ENCODE measurements at regions of chr1 and their contacts with region 1.

Region 1: DNA sequence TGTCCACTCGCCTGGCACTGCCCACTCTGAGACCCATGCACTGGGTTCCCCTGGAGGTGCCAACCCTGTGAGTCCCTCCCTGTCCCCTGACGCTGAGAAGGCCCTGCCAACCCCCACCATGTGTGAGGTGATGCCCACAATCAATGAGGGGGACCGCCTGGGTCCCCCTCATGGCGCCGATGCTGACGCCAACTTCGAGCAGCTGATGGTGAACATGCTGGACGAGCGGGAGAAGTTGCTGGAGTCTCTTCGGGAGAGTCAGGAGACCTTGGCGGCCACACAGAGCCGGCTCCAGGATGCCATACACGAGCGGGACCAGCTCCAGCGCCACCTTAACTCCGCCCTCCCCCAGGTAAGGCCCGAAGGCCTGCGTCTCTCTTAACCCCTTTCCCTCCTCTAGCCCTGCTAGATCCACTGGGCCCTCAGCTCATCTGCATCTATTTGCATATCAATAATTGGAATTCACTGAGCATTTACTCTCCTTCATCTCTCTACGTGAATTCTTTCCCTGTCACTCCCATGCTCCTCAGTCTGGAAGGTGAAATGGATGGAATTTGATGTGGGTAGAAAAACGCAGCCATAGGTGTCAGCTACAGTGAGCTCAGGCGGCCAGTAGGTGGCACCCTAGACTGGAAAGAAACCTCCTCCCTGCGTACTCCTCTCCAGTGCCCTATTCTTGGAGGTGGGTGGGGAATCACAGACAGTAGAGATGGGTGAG is 12.8 kb downstream of the PPFIA4 start:
- DNase-seq: peak; percentile 84
- H3K4me3 ChIP-seq: no peak overlapping the region; a peak in 1 of 4 replicates
- H3K27ac ChIP-seq: peak overlapping the region in 1 of 2 experiments; percentile 50; a peak in 1 of 4 replicates
- H3K4me1 ChIP-seq: peaks cover 20 to 42% of the 10 kb centered on the region in 2 experiments; a peak in 3 of 4 replicates
- H3K27me3 ChIP-seq: no peaks in the 10 kb centered on the region
- CTCF ChIP-seq: peak; percentile 97
- EP300 ChIP-seq: no peak
- RAD21 ChIP-seq: peak; percentile 93

Region 2: GRCh38 chr1:203026031-203026989 is 12.7 kb before region 1 on chr1 and contains the start of gene PPFIA4:
- CTCF ChIA-PET with region 1: interaction called, 73 read pairs
- POLR2A ChIA-PET with region 1: interaction called, 7 read pairs
- DNase-seq: peak; percentile 99
- H3K4me3 ChIP-seq: peak within 1 kb of the TSS; percentile 70 to 74
- H3K27ac ChIP-seq: peak within 1 kb of the TSS in 1 of 2 experiments; percentile 58; a peak in 1 of 4 replicates
- H3K4me1 ChIP-seq: peaks cover 0 to 34% of the 10 kb centered on the region in 2 experiments; a peak in 1 of 4 replicates
- H3K27me3 ChIP-seq: no peaks in the 10 kb centered on the region
- CTCF ChIP-seq: no peak
- EP300 ChIP-seq: 0 out of 4 replicates have a peak, but pooled peaks of 1 of the 2 experiments have one; percentile 16
- RAD21 ChIP-seq: peak; percentile 45
- polyA plus RNA-seq, gene PPFIA4: 4.4 and 5.5 TPM in 2 replicates

Region 3: GRCh38 chr1:203069030-203069747 is 30.1 kb after region 1 on chr1:
- CTCF ChIA-PET with region 1: interaction called, 52 read pairs
- POLR2A ChIA-PET with region 1: interaction called, 3 read pairs
- DNase-seq: peak; percentile 63
- H3K4me3 ChIP-seq: no peak overlapping the region
- H3K27ac ChIP-seq: peak overlapping the region in 1 of 2 experiments; percentile 87; a peak in 2 of 4 replicates
- H3K4me1 ChIP-seq: peaks cover 0 to 19% of the 10 kb centered on the region in 2 experiments; a peak in 2 of 4 replicates
- H3K27me3 ChIP-seq: no peaks in the 10 kb centered on the region
- CTCF ChIP-seq: no peak
- EP300 ChIP-seq: no peak
- RAD21 ChIP-seq: no peak

Region 4: DNA sequence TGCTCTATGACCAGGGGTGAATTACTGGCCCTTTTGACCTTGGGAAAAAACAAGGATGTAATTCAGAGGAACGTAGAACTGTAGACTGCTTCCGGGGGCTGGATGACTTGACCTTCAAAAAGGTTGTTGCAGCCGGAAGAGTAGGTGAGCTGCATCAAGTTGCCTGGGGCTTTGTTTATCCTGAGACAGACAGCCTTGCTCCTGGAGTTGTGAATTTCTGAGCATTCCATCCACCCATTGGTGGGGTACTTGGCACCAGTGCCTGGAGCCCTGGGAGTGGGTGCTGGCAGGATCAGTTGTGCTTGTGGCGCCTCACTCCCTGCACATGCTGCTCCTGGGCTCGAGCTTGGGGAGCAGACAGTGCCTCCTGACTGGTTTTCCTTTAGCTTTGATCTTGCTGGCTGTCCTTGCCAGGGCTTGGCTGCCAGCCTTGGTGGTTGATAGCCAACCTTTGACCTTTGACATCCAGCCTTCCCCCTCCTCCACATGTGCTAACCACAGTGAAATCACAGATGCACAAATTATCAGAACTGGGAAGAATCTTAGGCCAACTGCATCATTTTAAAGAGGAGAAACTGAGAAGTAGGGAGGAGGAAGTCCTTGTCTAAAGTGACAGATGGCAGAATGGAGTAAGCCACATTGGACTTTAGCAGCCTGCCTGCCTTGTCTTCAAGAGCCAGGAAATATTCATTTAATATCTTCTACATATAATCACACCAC is 63.0 kb after region 1 on chr1:
- CTCF ChIA-PET with region 1: interaction called, 28 read pairs
- POLR2A ChIA-PET with region 1: no interaction called
- DNase-seq: no peak
- H3K4me3 ChIP-seq: no peak overlapping the region
- H3K27ac ChIP-seq: no peak overlapping the region
- H3K4me1 ChIP-seq: no peaks in the 10 kb centered on the region; a peak in 1 of 4 replicates
- H3K27me3 ChIP-seq: no peaks in the 10 kb centered on the region; the same call in 1 of the 2 replicates
- CTCF ChIP-seq: no peak
- EP300 ChIP-seq: no peak
- RAD21 ChIP-seq: no peak

Region 5: DNA sequence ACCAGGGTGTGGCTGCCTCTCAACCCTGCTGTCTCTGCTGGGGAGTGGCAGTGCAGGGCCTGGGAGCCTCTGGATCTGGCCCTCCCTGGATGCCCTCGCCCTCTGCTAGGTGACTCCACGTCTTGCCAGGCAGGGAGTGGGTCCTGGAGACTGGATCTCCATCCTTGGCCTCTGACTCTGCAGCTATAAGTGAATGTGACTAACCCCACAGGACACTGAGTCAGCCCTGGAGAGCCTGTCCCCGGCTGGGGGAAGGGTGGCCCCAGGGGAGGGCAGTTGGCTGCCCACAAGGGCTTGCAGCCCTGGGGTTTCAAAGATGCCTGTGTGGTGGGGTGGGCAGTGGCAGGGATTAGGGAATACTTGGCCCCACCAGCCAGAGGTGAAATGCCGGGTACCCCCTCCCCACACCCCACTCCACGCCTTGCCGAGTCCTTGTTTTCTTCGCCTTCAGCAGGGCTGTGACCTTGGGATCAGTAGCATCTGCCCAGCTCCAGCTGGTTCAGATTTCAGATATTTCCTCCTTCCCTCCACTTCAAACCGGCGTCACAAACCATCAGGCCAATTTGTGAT is 138.5 kb after region 1 on chr1:
- CTCF ChIA-PET with region 1: interaction called, 37 read pairs
- POLR2A ChIA-PET with region 1: no interaction called
- DNase-seq: no peak
- H3K4me3 ChIP-seq: no peak overlapping the region
- H3K27ac ChIP-seq: peak overlapping the region in 1 of 2 experiments; percentile 57; a peak in 1 of 4 replicates
- H3K4me1 ChIP-seq: peaks cover 17 to 38% of the 10 kb centered on the region in 2 experiments; a peak in 2 of 4 replicates
- H3K27me3 ChIP-seq: no peaks in the 10 kb centered on the region
- CTCF ChIP-seq: no peak
- EP300 ChIP-seq: no peak
- RAD21 ChIP-seq: no peak

Region 6: DNA sequence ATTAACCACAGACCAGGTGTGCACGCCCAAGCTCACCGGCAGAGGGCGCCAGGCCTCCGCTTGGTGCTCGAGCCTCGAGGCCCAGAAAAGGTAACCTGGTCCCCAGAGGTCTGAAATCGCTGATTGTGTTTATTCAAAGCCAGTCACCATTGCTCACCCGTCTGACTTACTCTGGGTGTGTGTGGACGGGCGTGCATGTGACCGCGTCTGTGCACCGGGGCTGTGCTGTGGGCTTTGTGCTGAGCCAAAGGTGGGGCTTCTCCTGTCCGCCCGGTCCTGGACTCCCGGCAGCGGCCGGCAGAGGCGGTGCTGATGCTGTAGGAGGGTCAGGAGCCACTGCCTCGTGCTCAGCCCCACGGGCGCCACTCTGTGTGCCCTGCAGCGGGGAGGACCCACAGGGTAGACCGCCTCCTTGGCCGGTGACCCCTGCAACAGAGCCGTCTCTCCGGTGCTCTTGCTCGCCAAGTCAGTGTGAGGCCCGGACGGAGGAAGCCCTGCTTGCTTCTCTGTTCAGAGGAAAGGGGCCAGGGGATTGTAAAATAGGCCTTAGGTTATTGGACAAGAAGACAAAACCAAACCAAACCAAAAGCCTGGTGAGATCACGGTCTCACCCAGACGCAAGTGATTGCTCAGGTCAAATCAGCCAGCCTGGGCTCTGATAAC is 234.3 kb after region 1 on chr1:
- CTCF ChIA-PET with region 1: interaction called, 228 read pairs
- POLR2A ChIA-PET with region 1: no interaction called
- DNase-seq: peak; percentile 86
- H3K4me3 ChIP-seq: peak overlapping the region in 1 of 2 experiments; percentile 31; a peak in 1 of 4 replicates
- H3K27ac ChIP-seq: no peak overlapping the region
- H3K4me1 ChIP-seq: peaks cover 0 to 28% of the 10 kb centered on the region in 2 experiments; a peak in 1 of 4 replicates
- H3K27me3 ChIP-seq: no peaks in the 10 kb centered on the region
- CTCF ChIP-seq: peak; percentile 98
- EP300 ChIP-seq: no peak
- RAD21 ChIP-seq: peak; percentile 93